Upper lobe of right lung (tissue), 1 donor: ENCODE measurements at regions of chr1 and their contacts with region 1.

Region 1: GRCh38 chr1:10338047-10338446 is 60.8 kb upstream of the PGD start:
- DNase-seq: no peak
- ATAC-seq: peak; percentile 89
- H3K4me3 ChIP-seq: no peak overlapping the region
- H3K27ac ChIP-seq: no peak overlapping the region
- H3K4me1 ChIP-seq: no peaks in the 10 kb centered on the region
- H3K27me3 ChIP-seq: no peaks in the 10 kb centered on the region
- CTCF ChIP-seq: peak; percentile 64

Region 2: GRCh38 chr1:10045480-10046355 is 292.3 kb before region 1 on chr1:
- intact Hi-C with region 1: no loop called
- DNase-seq: no peak
- ATAC-seq: peak; percentile 41
- H3K4me3 ChIP-seq: no peak overlapping the region
- H3K27ac ChIP-seq: no peak overlapping the region
- H3K4me1 ChIP-seq: peaks cover 22% of the 10 kb centered on the region
- H3K27me3 ChIP-seq: no peaks in the 10 kb centered on the region
- CTCF ChIP-seq: no peak

Region 3: GRCh38 chr1:10209905-10210810 is 127.9 kb before region 1 on chr1 and contains the start of gene KIF1B:
- intact Hi-C with region 1: loop called (anchors 10 kb)
- DNase-seq: peak; percentile 99
- ATAC-seq: peak; percentile 97
- H3K4me3 ChIP-seq: peak within 1 kb of the TSS; percentile 90
- H3K27ac ChIP-seq: peak within 1 kb of the TSS; percentile 98
- H3K4me1 ChIP-seq: peaks cover 23% of the 10 kb centered on the region
- H3K27me3 ChIP-seq: no peaks in the 10 kb centered on the region
- CTCF ChIP-seq: peak; percentile 96
- total RNA-seq, gene KIF1B: 35.5 TPM